ENCODE measurements at regions of chr18 and their contacts with region 1.

Region 1: DNA sequence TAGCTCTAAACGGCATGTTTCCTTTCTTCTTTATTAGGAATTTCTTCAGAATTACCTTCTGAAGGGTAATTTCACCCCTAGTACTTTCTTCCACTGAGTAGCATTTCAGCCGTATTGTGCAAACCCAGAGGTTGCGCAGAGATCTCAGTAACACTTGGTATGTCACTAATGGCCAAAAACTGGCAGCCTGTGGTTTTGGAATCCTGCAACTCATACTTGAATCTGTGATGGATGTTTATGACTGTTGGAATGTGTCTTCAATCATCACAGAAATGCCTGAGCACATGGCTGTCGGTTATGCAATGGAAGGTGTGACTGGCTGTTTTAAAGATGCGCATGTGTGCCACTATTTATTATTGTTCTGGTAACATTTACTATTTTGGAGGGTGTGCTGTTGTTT is 100.0 kb downstream of the COLEC12 start:
- DNase-seq: no peak
- H3K4me3 ChIP-seq: no peak overlapping the region
- H3K27ac ChIP-seq: no peak overlapping the region
- H3K4me1 ChIP-seq: peaks cover 6% of the 10 kb centered on the region
- H3K27me3 ChIP-seq: no peaks in the 10 kb centered on the region
- CTCF ChIP-seq: no peak
- POLR2A ChIP-seq: no peak

Region 2: DNA sequence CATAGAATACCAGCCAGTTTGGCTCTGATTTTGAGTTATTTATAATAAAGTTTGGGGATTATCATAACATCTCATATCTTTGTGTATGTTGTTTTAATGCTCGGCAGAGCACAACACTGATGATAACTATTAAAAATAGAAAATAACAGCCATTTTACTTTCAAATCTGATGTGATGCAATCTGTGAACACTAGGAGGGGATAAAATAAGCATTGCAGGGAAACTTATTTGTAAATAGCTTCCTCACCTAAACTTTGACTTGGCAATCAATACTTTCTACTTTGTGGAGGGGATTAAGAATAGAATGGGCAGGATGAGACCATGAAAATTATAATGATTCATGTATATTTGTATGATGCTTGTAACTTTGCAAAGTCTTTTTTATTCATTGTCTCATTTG is 187.7 kb before region 1 on chr18:
- intact Hi-C with region 1: no loop called
- DNase-seq: no peak
- H3K4me3 ChIP-seq: no peak overlapping the region
- H3K27ac ChIP-seq: no peak overlapping the region
- H3K4me1 ChIP-seq: no peaks in the 10 kb centered on the region
- H3K27me3 ChIP-seq: no peaks in the 10 kb centered on the region
- CTCF ChIP-seq: no peak
- POLR2A ChIP-seq: no peak

Region 3: DNA sequence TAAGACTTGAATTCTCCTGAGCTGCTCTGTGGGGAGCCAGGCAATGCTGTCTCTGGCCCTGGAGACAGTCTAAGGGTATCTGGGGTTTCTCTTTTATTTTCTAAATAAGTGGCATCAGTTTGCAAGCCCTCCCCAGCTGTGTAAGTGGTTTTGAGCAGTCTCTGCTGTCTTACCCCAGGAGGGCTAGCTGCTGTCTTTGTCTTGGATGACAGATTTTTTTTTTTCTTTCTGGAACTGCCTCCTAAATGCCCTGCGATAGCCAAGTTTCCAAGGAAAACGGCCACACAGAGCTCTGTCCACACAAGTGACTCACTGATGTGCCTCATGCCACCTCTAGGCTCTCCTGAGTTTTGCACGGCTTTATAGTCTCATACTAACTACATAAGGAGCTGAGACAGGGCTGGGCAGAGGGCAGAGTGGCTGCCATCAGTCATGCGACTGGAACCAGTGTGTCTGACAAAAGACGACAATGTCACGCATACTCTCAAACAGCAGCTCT is 95.4 kb before region 1 on chr18:
- intact Hi-C with region 1: no loop called
- DNase-seq: no peak
- H3K4me3 ChIP-seq: no peak overlapping the region
- H3K27ac ChIP-seq: no peak overlapping the region
- H3K4me1 ChIP-seq: no peaks in the 10 kb centered on the region
- H3K27me3 ChIP-seq: no peaks in the 10 kb centered on the region
- CTCF ChIP-seq: no peak
- POLR2A ChIP-seq: no peak

Region 4: DNA sequence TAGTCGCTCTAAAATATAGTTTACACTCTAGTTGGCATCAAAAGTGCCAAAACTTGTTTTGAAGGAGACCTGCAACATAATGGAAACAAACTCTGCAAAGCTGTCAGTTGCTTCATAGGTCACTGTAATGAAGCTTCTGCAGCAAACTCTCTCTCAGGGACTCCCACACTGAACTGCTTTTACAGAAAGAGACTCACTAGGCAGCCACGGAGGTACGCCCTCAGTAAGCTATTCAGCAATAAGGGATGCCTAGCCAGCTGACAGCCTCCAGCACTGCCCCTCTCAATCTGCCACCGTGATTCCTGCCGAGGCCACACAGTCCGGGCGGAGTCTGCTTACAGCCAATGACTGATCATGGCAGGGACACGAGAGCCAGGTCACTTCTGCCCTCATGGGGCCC is 48.9 kb after region 1 on chr18:
- intact Hi-C with region 1: loop called (anchors 5 kb)
- DNase-seq: peak; percentile 47
- H3K4me3 ChIP-seq: no peak overlapping the region
- H3K27ac ChIP-seq: peak overlapping the region; percentile 36 to 41
- H3K4me1 ChIP-seq: no peaks in the 10 kb centered on the region
- H3K27me3 ChIP-seq: no peaks in the 10 kb centered on the region
- CTCF ChIP-seq: no peak
- POLR2A ChIP-seq: no peak

Measured in prostate gland (tissue), 2 donors.